Natural killer cell (primary cell): ENCODE measurements at regions of chr1 and their contacts with region 1.

Region 1: DNA sequence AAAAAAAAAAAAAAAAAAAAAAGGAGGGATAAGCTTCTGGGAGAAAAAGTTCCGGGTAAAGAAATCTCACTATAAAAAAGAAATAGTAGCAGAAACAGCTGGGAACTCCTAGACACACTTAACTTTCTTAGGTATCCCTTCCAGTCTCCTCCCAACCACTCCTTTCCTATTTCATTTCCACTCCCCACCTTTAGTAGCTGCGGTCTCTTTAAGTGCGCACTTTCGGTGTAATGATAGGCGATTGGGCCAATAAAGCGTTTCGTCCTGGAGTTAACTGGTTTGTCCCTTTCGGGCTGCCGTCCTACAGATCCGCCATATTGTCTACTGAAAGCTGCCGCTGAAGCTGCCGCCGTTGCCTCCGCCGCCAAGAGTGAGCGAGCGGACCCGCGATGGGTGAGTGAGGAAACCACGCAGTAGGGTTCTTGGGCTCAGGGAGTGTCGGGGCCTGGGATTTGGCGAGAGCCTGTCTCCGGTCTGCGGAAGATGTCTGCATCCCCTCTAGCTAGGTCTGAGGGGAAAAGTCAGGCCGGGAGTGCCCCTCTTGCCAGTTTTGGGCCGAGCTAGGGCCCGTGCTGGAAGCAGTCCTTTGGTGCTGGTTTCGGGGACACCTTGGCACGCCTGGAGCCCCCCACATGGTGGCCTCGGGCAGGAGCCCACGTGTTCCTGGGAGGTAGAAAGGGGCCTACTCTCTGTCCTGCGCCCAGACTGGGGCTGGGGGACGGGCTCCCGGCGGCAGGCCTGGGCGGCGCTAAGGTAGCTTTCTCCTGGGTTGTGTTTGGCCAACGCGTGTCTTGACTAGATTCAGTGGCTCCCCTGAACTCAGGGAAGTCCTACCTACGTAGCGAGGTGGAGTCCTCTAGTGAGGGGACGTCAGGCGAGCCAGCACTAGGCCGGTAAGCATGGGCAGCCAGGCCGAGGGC is at the start of gene KPNA6:
- DNase-seq: peak; percentile 88 to 97
- ATAC-seq: peak; percentile 85 to 94 (median 89)
- H3K4me3 ChIP-seq: peak within 1 kb of the TSS; percentile 96
- H3K4me3 Mint-ChIP-seq: peak within 1 kb of the TSS; percentile 99
- H3K27ac ChIP-seq: peak within 1 kb of the TSS; percentile 90
- H3K27ac Mint-ChIP-seq: peak within 1 kb of the TSS; percentile 95 to 98
- H3K4me1 ChIP-seq: peaks cover 35% of the 10 kb centered on the region
- H3K4me1 Mint-ChIP-seq: peaks cover 38 to 43% of the 10 kb centered on the region in 2 donors
- H3K27me3 ChIP-seq: no peaks in the 10 kb centered on the region
- H3K27me3 Mint-ChIP-seq: no peaks in the 10 kb centered on the region
- CTCF ChIP-seq: no peak
- total RNA-seq, gene KPNA6: 48.6 to 59.0 (median 52.8) TPM

Region 2: DNA sequence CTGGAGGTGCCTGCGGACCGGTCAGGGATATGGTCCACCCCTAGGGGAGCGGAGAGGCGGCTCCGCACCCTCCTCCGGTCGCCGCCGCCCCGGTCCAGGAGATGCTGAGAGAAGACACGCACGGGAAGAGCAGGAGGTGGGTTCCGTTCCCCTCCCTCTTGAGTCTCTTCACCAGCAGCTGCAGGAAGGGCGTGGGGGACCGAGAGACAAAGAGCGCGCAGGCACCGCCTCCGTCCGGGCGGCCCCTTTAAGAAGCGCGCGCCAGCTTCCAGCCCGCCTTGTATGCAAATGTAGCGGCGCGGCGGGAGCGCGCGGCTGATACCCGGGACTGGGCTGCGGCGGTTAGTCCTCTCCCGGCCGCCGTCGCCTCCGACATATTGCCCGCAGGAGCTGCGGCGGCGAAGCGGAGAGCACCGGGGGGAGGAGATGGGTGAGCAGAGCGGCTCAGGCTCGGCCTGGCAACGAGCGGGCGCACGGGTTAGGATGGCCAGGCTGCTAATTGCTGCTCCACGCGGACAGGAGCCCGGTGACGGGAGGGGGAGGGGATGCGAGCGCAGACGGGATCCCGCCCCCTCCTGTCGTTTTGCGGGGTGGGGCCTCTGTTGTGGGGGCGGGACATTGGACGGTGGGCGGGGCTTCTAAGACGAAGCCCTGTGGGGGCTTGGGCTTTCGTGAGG is 35.2 kb before region 1 on chr1 and contains the start of gene TMEM39B:
- intact Hi-C with region 1: loop called (anchors 1 kb)
- DNase-seq: peak; percentile 93 to 96
- ATAC-seq: peak; percentile 86 to 95 (median 88)
- H3K4me3 ChIP-seq: peak within 1 kb of the TSS; percentile 90
- H3K4me3 Mint-ChIP-seq: peak within 1 kb of the TSS; percentile 97
- H3K27ac ChIP-seq: peak within 1 kb of the TSS; percentile 77
- H3K27ac Mint-ChIP-seq: peak within 1 kb of the TSS; percentile 87 to 89
- H3K4me1 ChIP-seq: peaks cover 23% of the 10 kb centered on the region
- H3K4me1 Mint-ChIP-seq: peaks cover 25 to 29% of the 10 kb centered on the region in 2 donors
- H3K27me3 ChIP-seq: no peaks in the 10 kb centered on the region
- H3K27me3 Mint-ChIP-seq: no peaks in the 10 kb centered on the region
- CTCF ChIP-seq: no peak
- total RNA-seq, gene TMEM39B: 13.3 to 17.1 (median 15.8) TPM

Region 3: DNA sequence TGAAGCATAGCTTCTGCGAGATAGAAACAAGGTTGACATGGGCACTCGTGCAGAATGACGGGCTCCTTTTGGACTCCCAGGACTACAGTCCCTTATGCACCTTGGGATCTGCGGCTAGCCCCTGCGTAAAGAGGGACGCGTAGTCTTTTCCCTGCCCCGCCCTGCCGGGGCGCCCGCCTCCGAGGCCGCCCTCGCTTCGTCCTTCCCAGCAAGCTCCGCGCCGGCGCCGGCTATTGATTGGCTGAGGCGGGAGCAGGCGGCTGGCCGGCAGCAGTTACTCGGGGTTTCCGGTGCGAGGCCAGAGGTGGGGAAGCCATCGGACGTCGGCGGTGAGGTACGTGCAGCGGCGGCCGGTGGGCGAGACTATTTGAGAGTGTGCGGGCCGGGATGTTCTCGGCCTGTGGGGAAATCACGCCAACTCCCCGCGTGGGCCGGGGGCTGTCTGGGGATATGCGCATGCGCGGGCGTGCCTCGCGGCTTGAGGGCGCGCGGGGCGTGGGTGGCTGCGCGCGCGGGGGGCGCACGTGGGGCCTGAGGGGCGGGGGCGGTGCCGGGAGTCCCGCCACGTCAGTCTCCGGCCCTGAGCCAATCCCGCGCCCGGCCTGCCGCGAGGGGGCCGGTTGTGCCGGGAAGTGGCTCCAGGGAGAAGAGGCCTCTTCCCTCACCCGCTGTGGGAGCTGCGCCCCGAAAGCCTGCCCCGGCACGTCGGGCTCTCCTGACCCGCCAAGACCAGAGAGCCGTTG is 71.6 kb after region 1 on chr1 and contains the start of gene TXLNA:
- intact Hi-C with region 1: loop called (anchors 5 kb)
- DNase-seq: peak; percentile 87 to 92
- ATAC-seq: peak; percentile 86 to 93 (median 88)
- H3K4me3 ChIP-seq: peak within 1 kb of the TSS; percentile 70
- H3K4me3 Mint-ChIP-seq: peak within 1 kb of the TSS; percentile 95
- H3K27ac ChIP-seq: peak within 1 kb of the TSS; percentile 80
- H3K27ac Mint-ChIP-seq: peak within 1 kb of the TSS; percentile 95 to 98
- H3K4me1 ChIP-seq: peaks cover 28% of the 10 kb centered on the region
- H3K4me1 Mint-ChIP-seq: peaks cover 35 to 43% of the 10 kb centered on the region in 2 donors
- H3K27me3 ChIP-seq: no peaks in the 10 kb centered on the region
- H3K27me3 Mint-ChIP-seq: no peaks in the 10 kb centered on the region
- CTCF ChIP-seq: no peak
- total RNA-seq, gene TXLNA: 26.0 to 36.0 (median 33.3) TPM